ENCODE measurements at regions of chr13 and their contacts with region 1.

Region 1: GRCh38 chr13:51286135-51287002 is 53.1 kb upstream of the SERPINE3 start:
- DNase-seq: peak; percentile 79
- H3K4me3 ChIP-seq: no peak overlapping the region
- H3K27ac ChIP-seq: no peak overlapping the region
- H3K4me1 ChIP-seq: no peaks in the 10 kb centered on the region
- H3K27me3 ChIP-seq: no peaks in the 10 kb centered on the region
- CTCF ChIP-seq: peak; percentile 93

Region 2: DNA sequence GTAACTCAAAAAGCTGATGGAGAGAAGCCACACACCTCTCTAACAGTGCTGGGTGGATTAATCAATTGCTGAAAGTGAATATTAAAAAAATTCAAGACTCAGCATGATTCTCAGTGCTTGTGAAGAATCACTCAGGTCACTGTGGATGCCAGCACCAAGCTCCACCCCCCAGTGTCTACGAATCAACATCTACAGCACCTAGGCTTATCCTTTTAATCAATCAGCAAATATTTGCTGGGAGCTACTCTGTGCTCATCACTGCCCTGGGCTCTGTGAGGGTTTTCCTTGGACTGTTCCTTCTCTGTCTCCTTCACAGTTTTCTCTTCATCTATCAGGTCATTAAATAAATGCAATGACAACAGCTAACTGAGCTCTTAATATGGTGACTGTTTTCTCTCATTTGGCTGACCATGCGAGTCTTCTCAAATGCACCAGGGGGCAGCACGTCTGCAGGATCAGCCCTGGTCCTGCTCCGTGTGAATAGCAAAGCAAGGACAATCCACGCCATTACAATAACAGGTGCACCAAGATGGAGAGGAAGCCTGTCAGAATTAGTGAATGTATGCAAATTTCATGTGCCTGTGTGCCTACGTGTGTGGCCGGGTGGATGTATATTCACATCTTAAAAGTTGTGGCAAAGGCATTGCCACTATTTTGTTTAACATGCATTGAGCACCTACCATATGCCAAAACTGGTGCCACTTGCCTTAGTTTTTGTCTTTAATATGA is 160.7 kb before region 1 on chr13:
- intact Hi-C with region 1: loop called (anchors 5 kb)
- DNase-seq: peak; percentile 43
- H3K4me3 ChIP-seq: no peak overlapping the region
- H3K27ac ChIP-seq: no peak overlapping the region
- H3K4me1 ChIP-seq: no peaks in the 10 kb centered on the region
- H3K27me3 ChIP-seq: peaks cover 2% of the 10 kb centered on the region
- CTCF ChIP-seq: peak; percentile 56

Region 3: DNA sequence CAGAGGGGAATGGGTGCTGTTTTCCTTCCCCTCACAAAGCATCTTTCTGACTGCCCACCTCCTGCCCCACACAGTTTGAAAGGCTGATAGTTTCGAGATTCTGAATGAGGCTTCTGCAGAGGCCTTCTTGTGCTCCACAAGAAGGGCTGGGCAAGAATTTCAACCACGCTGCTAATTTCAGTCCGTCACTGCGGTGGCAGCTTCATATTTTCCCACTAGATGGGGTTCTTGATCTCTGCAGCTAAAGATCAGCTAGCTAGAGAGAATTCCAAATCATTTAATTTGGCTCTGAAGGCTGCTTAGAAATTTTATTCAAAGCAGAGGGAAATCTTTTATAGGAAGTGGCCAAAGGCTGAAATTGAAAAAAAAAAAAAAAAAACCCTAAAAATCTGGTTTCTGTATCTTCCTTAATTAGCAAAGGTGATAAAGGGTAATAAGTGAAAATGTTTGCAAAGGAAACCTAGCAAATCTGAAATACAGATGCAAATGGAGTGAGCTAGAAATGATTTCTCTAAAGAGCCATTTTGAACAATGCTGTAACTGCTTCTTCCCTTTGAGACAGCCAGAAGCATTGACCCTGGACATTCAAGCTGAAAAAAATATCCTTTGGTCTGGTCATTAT is 137.3 kb before region 1 on chr13:
- intact Hi-C with region 1: loop called (anchors 5 kb)
- DNase-seq: no peak
- H3K4me3 ChIP-seq: no peak overlapping the region
- H3K27ac ChIP-seq: no peak overlapping the region
- H3K4me1 ChIP-seq: no peaks in the 10 kb centered on the region
- H3K27me3 ChIP-seq: no peaks in the 10 kb centered on the region
- CTCF ChIP-seq: no peak

Region 4: DNA sequence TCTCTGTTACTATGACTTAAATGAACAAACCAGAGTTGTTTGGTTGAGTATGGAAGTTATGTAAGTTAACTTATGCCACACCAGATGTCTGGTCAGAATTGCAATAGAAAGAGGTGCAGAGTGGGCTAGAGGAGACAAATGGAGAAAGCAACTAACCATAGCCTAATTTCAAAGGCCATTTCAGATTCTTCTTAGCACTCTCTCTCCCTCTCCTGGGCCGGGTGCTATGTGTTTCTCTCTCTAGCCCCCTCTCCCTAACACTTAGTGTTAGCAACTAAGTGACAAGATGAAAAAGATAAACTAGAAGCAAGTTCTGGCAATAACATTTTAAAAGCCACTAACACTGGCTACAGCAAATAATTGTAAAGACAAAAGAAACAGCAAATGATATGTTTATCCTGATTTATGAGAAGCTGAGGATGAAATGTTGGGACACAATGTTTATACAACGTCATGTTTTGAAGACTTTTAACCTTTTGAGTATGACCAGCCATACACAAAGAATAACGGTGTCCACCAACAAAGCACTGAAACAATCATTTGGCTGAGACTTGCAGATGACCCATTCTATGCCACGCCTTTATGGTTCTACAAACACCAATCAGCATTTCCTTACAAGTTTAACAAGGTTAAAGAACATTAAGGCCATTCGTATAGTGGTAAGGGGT is 71.7 kb after region 1 on chr13:
- intact Hi-C with region 1: no loop called
- DNase-seq: no peak
- H3K4me3 ChIP-seq: no peak overlapping the region
- H3K27ac ChIP-seq: no peak overlapping the region
- H3K4me1 ChIP-seq: no peaks in the 10 kb centered on the region
- H3K27me3 ChIP-seq: no peaks in the 10 kb centered on the region
- CTCF ChIP-seq: no peak

Region 5: GRCh38 chr13:51523082-51523518 is 236.7 kb after region 1 on chr13:
- intact Hi-C with region 1: no loop called
- DNase-seq: no peak
- H3K4me3 ChIP-seq: no peak overlapping the region
- H3K27ac ChIP-seq: no peak overlapping the region
- H3K4me1 ChIP-seq: no peaks in the 10 kb centered on the region
- H3K27me3 ChIP-seq: no peaks in the 10 kb centered on the region
- CTCF ChIP-seq: no peak